ENCODE measurements at regions of chr20 and their contacts with region 1.

Region 1: DNA sequence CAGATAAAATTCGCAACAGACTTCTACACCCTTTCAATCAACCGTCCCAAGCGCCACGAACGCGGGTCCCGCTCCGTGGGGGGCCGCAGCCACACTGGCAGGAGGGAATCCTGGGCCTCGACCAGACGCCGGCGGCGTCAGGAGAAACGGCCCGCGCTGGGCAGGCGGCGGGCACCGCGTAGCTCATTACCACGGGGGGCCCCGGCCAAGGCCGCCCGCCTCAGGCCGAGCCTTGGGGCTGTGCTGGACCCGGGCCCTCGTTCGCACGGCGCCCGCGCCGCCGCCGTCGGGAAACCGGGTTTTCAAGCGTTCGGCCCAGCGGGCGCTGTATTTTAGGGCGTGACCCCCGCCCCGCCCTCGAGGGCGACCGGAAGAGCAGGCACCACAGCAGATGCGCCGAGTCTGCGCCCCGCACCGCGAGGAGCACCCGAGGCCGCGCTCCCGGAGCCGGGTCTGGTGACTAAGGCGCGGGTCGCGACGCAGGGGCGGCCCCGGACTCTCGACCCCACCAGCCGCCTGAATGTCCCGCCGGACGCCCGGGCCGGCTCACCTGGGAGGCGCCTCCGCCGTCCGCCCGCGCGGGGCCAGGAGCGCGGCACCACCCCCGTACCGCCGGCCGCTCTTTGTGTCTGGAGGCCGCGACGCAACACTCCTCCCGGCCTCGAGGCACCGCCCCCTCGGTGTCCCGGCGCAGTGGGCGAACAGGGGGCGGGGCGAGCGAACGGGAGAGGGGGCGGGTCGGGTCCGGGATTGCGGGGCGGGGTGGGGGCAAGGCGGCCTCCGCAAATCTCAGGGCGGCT is at the start of gene NINL:
- DNase-seq: peak; percentile 58
- ATAC-seq: peak; percentile 88
- H3K4me3 Mint-ChIP-seq: peak within 1 kb of the TSS; percentile 79
- H3K27ac Mint-ChIP-seq: peak within 1 kb of the TSS; percentile 17
- H3K4me1 Mint-ChIP-seq: peaks cover 4% of the 10 kb centered on the region
- H3K27me3 Mint-ChIP-seq: peaks cover 12% of the 10 kb centered on the region
- CTCF ChIP-seq: no peak
- total RNA-seq, gene NINL: 2.3 to 4.1 TPM

Region 2: DNA sequence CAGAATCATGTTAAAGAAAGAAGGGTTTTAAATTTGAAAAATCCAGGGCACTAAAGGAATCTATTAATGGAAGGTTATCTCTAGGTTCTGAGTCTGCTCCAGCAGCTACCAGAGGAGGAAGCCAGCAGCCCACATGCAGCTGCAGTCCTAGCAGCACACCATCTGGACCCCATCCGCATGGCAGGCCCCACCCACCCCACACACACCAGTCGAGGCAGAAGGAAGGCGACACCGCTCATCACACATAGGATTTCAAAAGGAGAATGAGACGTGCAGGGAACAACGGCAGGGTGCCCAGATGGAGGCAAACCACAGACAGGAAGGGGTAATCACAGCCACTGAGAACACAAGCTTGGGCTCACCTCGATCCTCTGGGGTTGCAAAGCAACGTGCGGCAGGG is 98.7 kb before region 1 on chr20:
- CTCF ChIA-PET with region 1: no interaction called
- POLR2A ChIA-PET with region 1: no interaction called
- intact Hi-C with region 1: loop called (anchors 10 kb)
- DNase-seq: peak; percentile 16
- ATAC-seq: peak; percentile 64
- H3K4me3 Mint-ChIP-seq: no peak overlapping the region
- H3K27ac Mint-ChIP-seq: no peak overlapping the region
- H3K4me1 Mint-ChIP-seq: peaks cover 24% of the 10 kb centered on the region
- H3K27me3 Mint-ChIP-seq: no peaks in the 10 kb centered on the region
- CTCF ChIP-seq: no peak

Region 3: GRCh38 chr20:25525295-25526266 is 59.5 kb before region 1 on chr20:
- CTCF ChIA-PET with region 1: no interaction called
- POLR2A ChIA-PET with region 1: no interaction called
- intact Hi-C with region 1: no loop called
- DNase-seq: no peak
- ATAC-seq: no peak
- H3K4me3 Mint-ChIP-seq: no peak overlapping the region
- H3K27ac Mint-ChIP-seq: no peak overlapping the region
- H3K4me1 Mint-ChIP-seq: no peaks in the 10 kb centered on the region
- H3K27me3 Mint-ChIP-seq: no peaks in the 10 kb centered on the region
- CTCF ChIP-seq: no peak

Region 4: GRCh38 chr20:25623736-25624499 is 38.8 kb after region 1 on chr20 and contains the start of gene NANP:
- CTCF ChIA-PET with region 1: no interaction called
- POLR2A ChIA-PET with region 1: no interaction called
- intact Hi-C with region 1: loop called (anchors 5 kb)
- DNase-seq: peak; percentile 96
- ATAC-seq: peak; percentile 85
- H3K4me3 Mint-ChIP-seq: peak within 1 kb of the TSS; percentile 84
- H3K27ac Mint-ChIP-seq: peak within 1 kb of the TSS; percentile 95
- H3K4me1 Mint-ChIP-seq: peaks cover 16% of the 10 kb centered on the region
- H3K27me3 Mint-ChIP-seq: no peaks in the 10 kb centered on the region
- CTCF ChIP-seq: no peak
- total RNA-seq, gene NANP: 7.6 to 8.0 TPM

Region 5: DNA sequence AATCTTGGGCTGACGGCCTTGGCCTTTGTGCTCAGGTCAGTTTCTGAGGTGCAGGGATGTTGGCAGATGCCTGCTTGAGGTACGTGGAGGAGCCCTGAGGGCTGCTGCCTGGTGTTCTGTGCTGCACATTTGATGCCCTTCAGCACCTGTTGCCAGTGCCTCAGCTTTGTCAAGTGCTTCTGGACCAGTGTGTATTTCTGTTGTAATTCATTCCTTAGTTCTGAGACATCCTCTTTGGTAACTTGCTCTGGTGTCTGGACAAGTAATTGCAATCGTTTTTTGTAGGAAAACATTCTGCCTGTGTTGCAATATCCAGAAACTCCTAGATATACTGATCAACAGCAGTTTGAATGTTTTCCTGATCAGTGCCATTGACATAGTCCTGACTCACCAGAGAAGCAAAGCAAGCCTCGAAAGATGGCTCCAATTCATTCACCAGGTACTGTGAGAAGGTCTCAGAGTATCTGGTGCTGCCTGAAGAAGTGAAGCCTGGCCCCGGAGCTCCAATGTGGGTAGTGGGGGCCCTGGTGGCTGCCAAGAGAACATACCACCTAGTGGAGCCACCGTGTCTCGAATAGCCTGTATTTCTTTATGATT is 84.8 kb after region 1 on chr20:
- CTCF ChIA-PET with region 1: no interaction called
- POLR2A ChIA-PET with region 1: no interaction called
- intact Hi-C with region 1: loop called (anchors 10 kb)
- DNase-seq: no peak
- ATAC-seq: no peak
- H3K4me3 Mint-ChIP-seq: no peak overlapping the region
- H3K27ac Mint-ChIP-seq: no peak overlapping the region
- H3K4me1 Mint-ChIP-seq: peaks cover 2% of the 10 kb centered on the region
- H3K27me3 Mint-ChIP-seq: no peaks in the 10 kb centered on the region
- CTCF ChIP-seq: no peak

Measured in activated CD8-positive, alpha-beta T cell treated with anti-CD3 and anti-CD28 coated beads for 36 hours (primary cell).